ENCODE measurements at regions of chr6 and their contacts with region 1.

Region 1: GRCh38 chr6:113660819-113661218 is 196.3 kb upstream of the MARCKS start:
- DNase-seq: no peak
- ATAC-seq: no peak
- H3K4me3 ChIP-seq: no peak overlapping the region
- H3K4me3 Mint-ChIP-seq: no peak overlapping the region
- H3K27ac ChIP-seq: no peak overlapping the region
- H3K27ac Mint-ChIP-seq: no peak overlapping the region
- H3K4me1 ChIP-seq: no peaks in the 10 kb centered on the region
- H3K4me1 Mint-ChIP-seq: no peaks in the 10 kb centered on the region
- H3K27me3 ChIP-seq: no peaks in the 10 kb centered on the region
- H3K27me3 Mint-ChIP-seq: peaks cover 3% of the 10 kb centered on the region in 2 donors

Region 2: GRCh38 chr6:113182370-113183141 is 478.3 kb before region 1 on chr6:
- CTCF ChIA-PET with region 1: no interaction called
- POLR2A ChIA-PET with region 1: no interaction called
- DNase-seq: no peak
- ATAC-seq: no peak
- H3K4me3 ChIP-seq: no peak overlapping the region
- H3K4me3 Mint-ChIP-seq: no peak overlapping the region
- H3K27ac ChIP-seq: no peak overlapping the region
- H3K27ac Mint-ChIP-seq: no peak overlapping the region
- H3K4me1 ChIP-seq: no peaks in the 10 kb centered on the region
- H3K4me1 Mint-ChIP-seq: no peaks in the 10 kb centered on the region
- H3K27me3 ChIP-seq: no peaks in the 10 kb centered on the region
- H3K27me3 Mint-ChIP-seq: no peaks in the 10 kb centered on the region

Region 3: GRCh38 chr6:113671421-113671820 is 10.6 kb after region 1 on chr6:
- CTCF ChIA-PET with region 1: interaction called in 1 of 2 experiments, 11 read pairs
- POLR2A ChIA-PET with region 1: no interaction called
- DNase-seq: no peak
- ATAC-seq: no peak
- H3K4me3 ChIP-seq: no peak overlapping the region
- H3K4me3 Mint-ChIP-seq: no peak overlapping the region
- H3K27ac ChIP-seq: no peak overlapping the region
- H3K27ac Mint-ChIP-seq: no peak overlapping the region
- H3K4me1 ChIP-seq: no peaks in the 10 kb centered on the region
- H3K4me1 Mint-ChIP-seq: no peaks in the 10 kb centered on the region
- H3K27me3 ChIP-seq: peaks cover 0 to under 1% of the 10 kb centered on the region in 2 experiments
- H3K27me3 Mint-ChIP-seq: peaks cover 2 to 6% of the 10 kb centered on the region in 2 donors